Activated B cell treated with CpG ODN at 0.5 μM for 24 hours (primary cell): ENCODE measurements at regions of chr20 and their contacts with region 1.

Region 1: DNA sequence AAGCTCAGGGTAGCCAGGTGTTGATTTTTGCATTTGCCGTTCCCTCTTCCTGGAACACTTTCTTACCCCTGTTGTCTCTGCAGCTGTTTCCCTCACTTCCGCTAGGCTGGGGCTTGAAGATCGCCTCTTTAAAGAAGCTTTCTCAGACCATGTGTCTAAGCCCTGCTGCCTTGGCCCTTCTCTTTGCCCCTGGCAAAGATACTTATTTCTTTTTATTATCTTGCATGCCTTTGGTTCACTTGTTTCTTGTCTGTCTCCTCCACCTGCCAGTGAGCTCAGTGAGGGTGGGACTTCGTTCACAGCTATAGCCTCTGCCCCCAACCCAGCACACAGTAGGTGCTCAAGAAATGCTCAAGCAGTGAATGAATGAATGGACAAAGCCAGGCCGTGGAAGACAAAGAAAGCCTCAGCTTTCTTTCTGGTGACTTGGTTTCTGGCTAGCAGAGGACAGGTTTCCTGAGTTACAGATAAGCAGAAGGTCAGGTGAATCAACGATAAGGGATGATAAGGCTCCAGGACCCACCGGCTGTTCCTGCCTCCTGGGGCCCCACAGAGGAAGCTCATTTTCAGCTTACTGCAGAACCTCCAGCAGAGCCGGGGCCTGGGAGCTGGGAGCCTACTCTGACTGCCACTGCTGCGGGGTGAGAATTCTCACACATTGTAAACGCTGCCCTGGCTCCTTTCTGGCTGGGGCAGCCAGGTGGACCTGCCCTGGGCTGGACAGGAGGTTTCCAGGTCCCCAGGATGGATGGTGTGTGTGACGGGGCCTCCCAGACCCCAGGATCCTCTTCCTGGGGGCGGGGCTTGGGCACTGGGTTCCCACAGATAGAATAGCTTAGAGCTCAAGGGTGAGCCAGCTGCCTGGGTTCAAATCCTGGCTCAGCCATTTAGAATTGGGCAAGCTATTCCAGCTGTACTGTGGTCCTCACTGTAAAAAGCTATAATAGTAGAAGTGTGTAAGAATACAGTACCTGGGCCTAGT is 29.8 kb downstream of the SNAI1 start:
- DNase-seq: no peak
- ATAC-seq: peak; percentile 81
- H3K4me3 Mint-ChIP-seq: no peak overlapping the region
- H3K27ac Mint-ChIP-seq: peak overlapping the region; percentile 75
- H3K4me1 Mint-ChIP-seq: peaks cover 16% of the 10 kb centered on the region
- H3K27me3 Mint-ChIP-seq: peaks cover 3% of the 10 kb centered on the region
- CTCF ChIP-seq: no peak

Region 2: GRCh38 chr20:49999329-49999728 is 13.2 kb before region 1 on chr20:
- CTCF ChIA-PET with region 1: no interaction called
- POLR2A ChIA-PET with region 1: interaction called, 11 read pairs
- intact Hi-C with region 1: loop called (anchors 1 kb)
- DNase-seq: peak; percentile 68
- ATAC-seq: peak; percentile 99
- H3K4me3 Mint-ChIP-seq: peak overlapping the region; percentile 44
- H3K27ac Mint-ChIP-seq: peak overlapping the region; percentile 14
- H3K4me1 Mint-ChIP-seq: peaks cover 24% of the 10 kb centered on the region
- H3K27me3 Mint-ChIP-seq: peaks cover 4% of the 10 kb centered on the region
- CTCF ChIP-seq: no peak

Region 3: DNA sequence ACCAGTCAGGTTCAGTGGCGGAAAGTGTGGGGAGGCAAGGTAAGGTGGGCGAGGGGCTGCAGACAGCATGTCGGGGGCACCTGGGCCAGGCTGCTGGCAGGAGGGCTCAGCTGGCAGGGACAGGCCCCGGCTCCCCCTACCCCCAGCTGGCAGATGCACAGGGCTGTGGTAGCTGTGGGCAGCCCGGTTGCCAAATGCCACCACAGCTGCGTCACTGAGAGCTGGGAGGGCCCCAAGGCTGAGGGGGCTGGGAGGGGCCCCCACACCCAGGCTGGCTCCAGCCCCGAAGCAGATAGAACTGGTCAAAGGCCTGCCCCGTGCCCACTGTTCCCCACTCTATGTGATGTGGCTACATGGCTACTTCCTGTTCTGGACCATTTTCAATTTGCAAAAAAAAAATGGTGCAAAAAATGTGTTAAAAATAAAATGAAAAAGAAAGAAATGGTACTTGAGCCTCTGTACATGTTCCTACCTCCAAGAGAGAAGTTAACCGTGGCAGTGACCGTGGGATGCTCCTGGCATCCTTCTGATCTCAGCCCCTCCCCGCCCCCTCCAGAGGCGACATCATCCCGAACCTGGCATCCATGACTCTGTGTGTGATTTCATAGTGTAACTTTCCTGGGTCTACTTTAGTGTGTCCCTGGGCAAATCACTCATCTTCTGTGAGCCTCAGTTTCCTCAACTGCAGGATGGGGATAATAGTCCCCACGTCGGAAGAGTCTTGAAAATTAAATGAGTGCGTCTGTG is 36.0 kb after region 1 on chr20:
- CTCF ChIA-PET with region 1: no interaction called
- POLR2A ChIA-PET with region 1: interaction called, 4 read pairs
- intact Hi-C with region 1: loop called (anchors 5 kb)
- DNase-seq: peak; percentile 37
- ATAC-seq: peak; percentile 59
- H3K4me3 Mint-ChIP-seq: peak overlapping the region; percentile 5
- H3K27ac Mint-ChIP-seq: peak overlapping the region; percentile 9
- H3K4me1 Mint-ChIP-seq: peaks cover 39% of the 10 kb centered on the region
- H3K27me3 Mint-ChIP-seq: no peaks in the 10 kb centered on the region
- CTCF ChIP-seq: no peak